ENCODE measurements at regions of chr7 and their contacts with region 1.

Region 1: GRCh38 chr7:142782922-142783900 is 12.4 kb downstream of the PRSS2 start:
- DNase-seq: peak; percentile 66
- ATAC-seq: peak; percentile 91
- H3K4me3 ChIP-seq: peak overlapping the region; percentile 65
- H3K27ac ChIP-seq: peak overlapping the region; percentile 45; the same call in 1 of the 2 replicates
- H3K4me1 ChIP-seq: peaks cover 9% of the 10 kb centered on the region
- H3K27me3 ChIP-seq: no peaks in the 10 kb centered on the region
- CTCF ChIP-seq: peak; percentile 91 to 100 (median 97); a peak in 5 of 6 replicates
- EP300 ChIP-seq: peak in 1 of 2 experiments; percentile 32; a peak in 1 of 4 replicates
- POLR2A ChIP-seq: no peak
- RAD21 ChIP-seq: peak; percentile 100

Region 2: DNA sequence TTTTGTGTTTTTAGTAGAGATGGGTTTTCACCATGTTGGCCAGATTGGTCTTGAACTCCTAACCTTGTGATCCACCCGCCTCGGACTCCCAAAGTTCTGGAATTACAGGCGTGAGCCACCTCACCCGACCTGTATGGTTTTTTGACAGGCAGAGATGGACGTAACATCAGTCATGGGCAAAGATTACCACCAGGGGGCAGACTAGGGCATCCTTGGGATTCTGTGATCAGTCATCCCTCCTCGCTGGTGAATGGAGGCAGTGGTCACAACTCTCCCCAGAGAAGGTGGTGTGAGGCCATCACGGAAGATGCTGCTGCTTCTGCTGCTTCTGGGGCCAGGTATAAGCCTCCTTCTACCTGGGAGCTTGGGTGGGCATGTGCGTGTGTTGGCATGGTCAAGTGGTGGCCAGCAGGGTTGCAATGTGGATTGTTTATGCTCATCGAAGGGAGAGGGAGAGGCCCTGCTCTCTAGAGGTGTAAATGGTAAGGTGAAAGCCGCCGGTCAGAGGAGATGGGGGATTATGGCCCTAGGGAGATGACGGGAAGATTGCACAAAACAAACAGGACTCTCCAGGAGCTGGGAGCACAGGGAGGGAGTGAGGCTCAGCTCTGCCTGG is 156.7 kb before region 1 on chr7:
- CTCF ChIA-PET with region 1: interaction called, 217 read pairs
- POLR2A ChIA-PET with region 1: no interaction called
- RAD21 ChIA-PET with region 1: interaction called, 26 read pairs
- SMC1A ChIA-PET with region 1: interaction called, 102 read pairs
- in situ Hi-C with region 1: loop called (anchors 5 kb)
- intact Hi-C with region 1: no loop called
- DNase-seq: no peak
- ATAC-seq: peak; percentile 96
- H3K4me3 ChIP-seq: no peak overlapping the region
- H3K27ac ChIP-seq: no peak overlapping the region
- H3K4me1 ChIP-seq: no peaks in the 10 kb centered on the region
- H3K27me3 ChIP-seq: peaks cover 0 to 3% of the 10 kb centered on the region in 2 experiments; a peak in 1 of 4 replicates
- CTCF ChIP-seq: peak; percentile 56 to 79 (median 69)
- EP300 ChIP-seq: no peak
- POLR2A ChIP-seq: no peak
- RAD21 ChIP-seq: peak; percentile 37

Region 3: GRCh38 chr7:142669074-142669654 is 114.0 kb before region 1 on chr7:
- CTCF ChIA-PET with region 1: interaction called, 87 read pairs
- POLR2A ChIA-PET with region 1: no interaction called
- RAD21 ChIA-PET with region 1: interaction called, 29 read pairs
- SMC1A ChIA-PET with region 1: interaction called, 31 read pairs
- in situ Hi-C with region 1: no loop called
- intact Hi-C with region 1: loop called (anchors 1 kb)
- DNase-seq: no peak
- ATAC-seq: peak; percentile 78
- H3K4me3 ChIP-seq: no peak overlapping the region
- H3K27ac ChIP-seq: no peak overlapping the region
- H3K4me1 ChIP-seq: peaks cover 4% of the 10 kb centered on the region; the same call in 1 of the 2 replicates
- H3K27me3 ChIP-seq: no peaks in the 10 kb centered on the region
- CTCF ChIP-seq: peak; percentile 35 to 51 (median 41); a peak in 4 of 6 replicates
- EP300 ChIP-seq: no peak
- POLR2A ChIP-seq: no peak
- RAD21 ChIP-seq: peak; percentile 65

Region 4: DNA sequence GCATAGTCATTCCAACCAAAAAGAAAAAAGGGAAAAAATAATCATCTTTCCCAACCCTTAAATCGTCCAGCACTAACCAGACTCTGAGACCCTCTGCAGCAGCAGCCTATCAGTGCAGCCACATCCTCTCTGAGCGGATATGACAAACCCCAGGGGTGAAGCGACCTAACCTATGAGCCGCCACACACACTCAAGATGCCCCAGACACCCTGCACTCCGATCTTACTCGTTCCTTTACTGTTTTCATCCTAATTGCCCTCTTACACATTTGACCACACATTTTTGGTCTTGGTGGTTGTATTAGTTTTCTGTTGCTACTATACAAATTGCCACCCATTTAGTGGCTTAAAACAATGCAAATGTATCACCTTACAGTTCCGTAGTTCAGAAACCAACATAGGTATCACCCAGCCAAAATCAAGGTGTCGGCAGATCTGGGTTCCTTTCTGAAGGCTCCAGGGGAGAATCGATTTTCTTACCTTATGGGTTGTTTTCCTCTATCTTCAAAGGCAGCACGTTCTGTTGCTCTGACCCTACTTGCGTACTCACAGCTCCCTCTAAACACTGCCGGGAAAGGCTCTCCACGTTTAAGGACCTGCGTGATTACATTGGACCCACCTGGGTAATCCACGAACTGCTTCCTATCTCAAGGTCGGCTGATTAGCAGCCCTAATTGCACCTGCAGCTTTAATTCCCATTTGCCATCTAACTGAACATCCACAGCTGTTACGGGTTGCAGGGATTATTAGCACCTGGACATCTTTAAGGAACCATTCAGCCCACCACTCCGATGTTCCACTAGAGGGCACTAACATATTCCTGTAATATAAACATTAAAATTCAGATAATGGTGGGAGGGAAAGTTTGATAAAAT is 71.2 kb before region 1 on chr7:
- CTCF ChIA-PET with region 1: interaction called, 286 read pairs
- POLR2A ChIA-PET with region 1: interaction called, 6 read pairs
- RAD21 ChIA-PET with region 1: interaction called, 163 read pairs
- SMC1A ChIA-PET with region 1: interaction called, 235 read pairs
- in situ Hi-C with region 1: no loop called
- intact Hi-C with region 1: loop called (anchors 1 kb)
- DNase-seq: no peak
- ATAC-seq: peak; percentile 77
- H3K4me3 ChIP-seq: no peak overlapping the region
- H3K27ac ChIP-seq: no peak overlapping the region
- H3K4me1 ChIP-seq: no peaks in the 10 kb centered on the region
- H3K27me3 ChIP-seq: no peaks in the 10 kb centered on the region
- CTCF ChIP-seq: peak; percentile 57 to 70 (median 59)
- EP300 ChIP-seq: no peak
- POLR2A ChIP-seq: no peak
- RAD21 ChIP-seq: peak; percentile 66

Region 5: DNA sequence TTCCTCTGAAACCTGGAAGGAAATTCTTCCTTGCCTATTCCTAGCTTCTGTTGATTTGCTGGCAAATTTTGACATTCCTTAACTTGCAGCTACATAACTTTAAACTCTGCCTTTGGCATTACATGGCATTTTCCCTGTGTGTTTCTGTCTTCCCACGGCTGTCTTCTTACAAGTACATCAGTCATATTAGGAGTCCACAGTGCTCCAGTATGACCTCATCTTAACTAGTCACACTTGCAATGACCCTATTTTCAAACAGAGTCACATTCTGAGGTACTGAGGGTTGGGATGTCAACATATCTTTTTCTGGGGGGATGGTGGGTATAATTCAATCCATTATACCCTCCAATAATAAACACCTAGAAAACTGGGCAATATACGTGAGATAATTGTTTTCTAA is 34.3 kb after region 1 on chr7:
- CTCF ChIA-PET with region 1: interaction called, 1,055 read pairs
- POLR2A ChIA-PET with region 1: interaction called, 325 read pairs
- RAD21 ChIA-PET with region 1: interaction called, 813 read pairs
- SMC1A ChIA-PET with region 1: interaction called, 786 read pairs
- in situ Hi-C with region 1: no loop called
- intact Hi-C with region 1: no loop called
- DNase-seq: no peak
- ATAC-seq: no peak
- H3K4me3 ChIP-seq: no peak overlapping the region
- H3K27ac ChIP-seq: no peak overlapping the region
- H3K4me1 ChIP-seq: no peaks in the 10 kb centered on the region
- H3K27me3 ChIP-seq: no peaks in the 10 kb centered on the region
- CTCF ChIP-seq: no peak
- EP300 ChIP-seq: no peak
- POLR2A ChIP-seq: no peak
- RAD21 ChIP-seq: no peak

Region 6: GRCh38 chr7:143181349-143181748 is 398.1 kb after region 1 on chr7:
- CTCF ChIA-PET with region 1: no interaction called
- POLR2A ChIA-PET with region 1: no interaction called
- RAD21 ChIA-PET with region 1: no interaction called
- SMC1A ChIA-PET with region 1: no interaction called
- in situ Hi-C with region 1: no loop called
- intact Hi-C with region 1: no loop called
- DNase-seq: no peak
- ATAC-seq: no peak
- H3K4me3 ChIP-seq: no peak overlapping the region
- H3K27ac ChIP-seq: no peak overlapping the region
- H3K4me1 ChIP-seq: no peaks in the 10 kb centered on the region
- H3K27me3 ChIP-seq: no peaks in the 10 kb centered on the region
- CTCF ChIP-seq: no peak
- EP300 ChIP-seq: no peak
- POLR2A ChIP-seq: no peak
- RAD21 ChIP-seq: no peak

Region 7: DNA sequence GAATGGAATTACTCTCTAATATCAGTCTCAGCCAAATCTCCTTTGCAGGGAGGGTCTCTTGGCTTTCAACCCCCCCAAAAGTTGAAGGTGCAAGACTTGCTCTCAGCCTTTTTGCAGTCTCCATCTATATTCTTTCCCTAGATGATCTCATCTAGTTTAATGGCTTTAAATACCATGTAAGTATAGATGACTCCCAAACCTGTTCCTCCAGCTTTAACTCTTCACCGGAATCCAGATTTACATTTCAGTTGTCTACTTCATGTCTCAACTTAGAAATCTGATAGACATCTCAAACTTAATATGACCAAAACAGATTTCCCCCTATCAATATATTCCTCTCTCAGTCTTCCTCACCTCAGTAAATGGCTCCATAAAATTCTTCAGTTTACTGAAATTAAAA is 684.5 kb after region 1 on chr7:
- CTCF ChIA-PET with region 1: no interaction called
- POLR2A ChIA-PET with region 1: no interaction called
- RAD21 ChIA-PET with region 1: no interaction called
- SMC1A ChIA-PET with region 1: no interaction called
- in situ Hi-C with region 1: no loop called
- intact Hi-C with region 1: no loop called
- DNase-seq: no peak
- ATAC-seq: no peak
- H3K4me3 ChIP-seq: no peak overlapping the region
- H3K27ac ChIP-seq: no peak overlapping the region
- H3K4me1 ChIP-seq: no peaks in the 10 kb centered on the region
- H3K27me3 ChIP-seq: peaks cover 0 to 2% of the 10 kb centered on the region in 2 experiments; a peak in 1 of 4 replicates
- CTCF ChIP-seq: no peak
- EP300 ChIP-seq: no peak
- POLR2A ChIP-seq: no peak
- RAD21 ChIP-seq: no peak

Measured in GM12878 (cell line).